Activated CD4-positive, alpha-beta memory T cell treated with anti-CD3 and anti-CD28 coated beads, Interleukin-2, amount 10 ng/mL, durations not matched to agents 7 days and 5 days (primary cell): ENCODE measurements at regions of chr1 and their contacts with region 1.

Region 1: GRCh38 chr1:113928941-113929749 is at the start of gene HIPK1:
- DNase-seq: peak; percentile 94
- H3K4me3 Mint-ChIP-seq: peak within 1 kb of the TSS; percentile 94
- H3K27ac Mint-ChIP-seq: peak within 1 kb of the TSS; percentile 95
- H3K4me1 Mint-ChIP-seq: peaks cover 48% of the 10 kb centered on the region
- H3K27me3 Mint-ChIP-seq: peaks cover 4% of the 10 kb centered on the region
- total RNA-seq, gene HIPK1: 89.5 to 92.5 TPM

Region 2: GRCh38 chr1:113759333-113760101 is 169.6 kb before region 1 on chr1 and contains the start of gene PHTF1:
- CTCF ChIA-PET with region 1: interaction called, 10 read pairs
- POLR2A ChIA-PET with region 1: interaction called, 19 read pairs
- DNase-seq: peak; percentile 69
- H3K4me3 Mint-ChIP-seq: peak within 1 kb of the TSS; percentile 88
- H3K27ac Mint-ChIP-seq: peak within 1 kb of the TSS; percentile 91
- H3K4me1 Mint-ChIP-seq: peaks cover 41% of the 10 kb centered on the region
- H3K27me3 Mint-ChIP-seq: no peaks in the 10 kb centered on the region
- total RNA-seq, gene PHTF1: 22.1 to 23.0 TPM

Region 3: DNA sequence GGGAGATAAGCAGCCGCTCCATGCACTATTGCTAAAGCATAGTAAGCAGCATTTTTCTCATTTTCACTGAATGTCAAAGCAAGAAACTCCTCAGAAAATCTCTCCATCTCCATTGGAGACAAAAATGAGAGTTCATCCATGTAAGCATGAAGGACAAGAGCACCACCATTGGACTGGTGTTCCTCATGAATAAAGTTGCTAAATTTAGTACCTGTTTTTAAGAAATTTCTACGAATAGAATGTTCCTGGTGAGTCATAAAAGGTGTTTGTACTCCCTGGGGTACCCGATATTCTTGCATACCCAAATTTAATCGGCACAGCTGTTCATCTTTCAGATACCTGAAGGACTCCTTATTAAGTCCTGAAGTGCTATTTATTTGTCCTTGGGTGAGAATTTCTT is 131.7 kb before region 1 on chr1:
- CTCF ChIA-PET with region 1: no interaction called
- POLR2A ChIA-PET with region 1: no interaction called
- DNase-seq: no peak
- H3K4me3 Mint-ChIP-seq: no peak overlapping the region
- H3K27ac Mint-ChIP-seq: no peak overlapping the region
- H3K4me1 Mint-ChIP-seq: peaks cover 31% of the 10 kb centered on the region
- H3K27me3 Mint-ChIP-seq: no peaks in the 10 kb centered on the region

Region 4: DNA sequence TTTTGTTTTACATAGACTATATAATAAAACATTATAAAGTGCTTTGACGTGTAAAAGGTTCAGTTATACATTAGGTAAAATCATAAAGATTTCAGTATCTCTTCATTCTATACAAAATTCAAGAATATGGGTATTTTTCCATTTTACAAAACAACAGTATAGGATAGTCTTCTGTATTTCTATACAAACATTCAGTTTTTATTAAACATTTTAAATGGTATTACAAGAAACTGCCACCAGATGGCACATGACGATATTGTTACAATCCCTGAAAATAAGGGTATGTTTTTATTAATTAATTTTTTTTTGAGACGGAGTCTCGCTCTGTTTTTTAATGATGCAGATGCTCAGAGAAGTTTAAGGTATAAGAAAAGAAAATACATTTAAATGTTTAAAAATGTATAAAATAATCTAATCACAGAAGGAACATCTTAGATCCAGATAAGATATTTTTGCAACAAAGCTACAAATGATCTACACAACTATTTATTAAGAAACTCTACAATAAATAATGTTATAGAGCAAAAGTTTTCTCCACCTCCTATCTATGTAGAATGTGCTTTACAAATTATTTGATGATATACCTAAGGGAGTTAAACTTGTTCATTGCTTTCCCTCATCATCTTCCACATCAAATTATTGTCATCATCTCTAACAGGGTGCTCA is 93.4 kb before region 1 on chr1:
- CTCF ChIA-PET with region 1: interaction called, 35 read pairs
- POLR2A ChIA-PET with region 1: interaction called, 7 read pairs
- DNase-seq: no peak
- H3K4me3 Mint-ChIP-seq: no peak overlapping the region
- H3K27ac Mint-ChIP-seq: peak overlapping the region; percentile 14
- H3K4me1 Mint-ChIP-seq: peaks cover 8% of the 10 kb centered on the region
- H3K27me3 Mint-ChIP-seq: no peaks in the 10 kb centered on the region

Region 5: DNA sequence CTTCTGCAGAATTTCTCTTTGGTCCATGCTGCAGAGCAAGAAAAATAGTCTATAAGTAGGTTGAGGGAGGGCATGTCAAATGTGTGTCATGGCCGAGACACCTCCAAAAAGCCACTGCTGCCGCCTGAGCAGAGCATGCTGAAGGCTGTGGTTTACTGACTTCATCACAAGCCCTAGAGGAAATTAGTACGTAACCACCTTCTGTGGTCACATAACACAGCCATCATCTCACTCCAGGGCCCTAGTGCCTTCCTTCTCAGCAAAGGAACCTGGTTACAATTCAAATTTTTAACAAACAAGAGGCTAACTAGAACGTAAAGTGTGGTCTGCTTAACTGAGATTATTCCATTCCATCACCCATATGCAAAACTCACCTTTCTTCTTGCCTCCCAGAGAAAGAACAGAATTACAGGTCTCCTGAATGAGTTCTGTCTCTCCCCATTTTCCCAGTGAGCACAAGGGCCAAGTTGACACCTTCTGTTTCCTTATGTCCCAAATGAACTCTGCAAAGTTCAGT is 57.5 kb before region 1 on chr1 and contains the start of gene PTPN22:
- CTCF ChIA-PET with region 1: interaction called, 10 read pairs
- POLR2A ChIA-PET with region 1: interaction called, 58 read pairs
- DNase-seq: peak; percentile 89
- H3K4me3 Mint-ChIP-seq: peak within 1 kb of the TSS; percentile 91
- H3K27ac Mint-ChIP-seq: peak within 1 kb of the TSS; percentile 98
- H3K4me1 Mint-ChIP-seq: peaks cover 74% of the 10 kb centered on the region
- H3K27me3 Mint-ChIP-seq: no peaks in the 10 kb centered on the region
- total RNA-seq, gene PTPN22: 79.4 to 81.1 TPM

Region 6: GRCh38 chr1:113917400-113918082 is 11.6 kb before region 1 on chr1:
- CTCF ChIA-PET with region 1: interaction called, 7 read pairs
- POLR2A ChIA-PET with region 1: interaction called, 26 read pairs
- DNase-seq: no peak
- H3K4me3 Mint-ChIP-seq: no peak overlapping the region
- H3K27ac Mint-ChIP-seq: no peak overlapping the region
- H3K4me1 Mint-ChIP-seq: peaks cover 7% of the 10 kb centered on the region
- H3K27me3 Mint-ChIP-seq: peaks cover 1% of the 10 kb centered on the region

Region 7: GRCh38 chr1:113946678-113947387 is 17.7 kb after region 1 on chr1:
- CTCF ChIA-PET with region 1: interaction called, 19 read pairs
- POLR2A ChIA-PET with region 1: interaction called, 62 read pairs
- DNase-seq: no peak
- H3K4me3 Mint-ChIP-seq: peak overlapping the region; percentile 6
- H3K27ac Mint-ChIP-seq: peak overlapping the region; percentile 71
- H3K4me1 Mint-ChIP-seq: peaks cover 51% of the 10 kb centered on the region
- H3K27me3 Mint-ChIP-seq: no peaks in the 10 kb centered on the region

Region 8: GRCh38 chr1:114346480-114347029 is 417.4 kb after region 1 on chr1:
- CTCF ChIA-PET with region 1: interaction called, 3 read pairs
- POLR2A ChIA-PET with region 1: interaction called, 11 read pairs
- DNase-seq: peak; percentile 99
- H3K4me3 Mint-ChIP-seq: peak overlapping the region; percentile 78
- H3K27ac Mint-ChIP-seq: peak overlapping the region; percentile 94
- H3K4me1 Mint-ChIP-seq: peaks cover 48% of the 10 kb centered on the region
- H3K27me3 Mint-ChIP-seq: no peaks in the 10 kb centered on the region

Region 9: GRCh38 chr1:114467488-114467887 is 538.3 kb after region 1 on chr1:
- CTCF ChIA-PET with region 1: no interaction called
- POLR2A ChIA-PET with region 1: no interaction called
- DNase-seq: no peak
- H3K4me3 Mint-ChIP-seq: no peak overlapping the region
- H3K27ac Mint-ChIP-seq: peak overlapping the region; percentile 11
- H3K4me1 Mint-ChIP-seq: peaks cover 32% of the 10 kb centered on the region
- H3K27me3 Mint-ChIP-seq: no peaks in the 10 kb centered on the region